T-cell (primary cell): ENCODE measurements at regions of chr19 and their contacts with region 1.

Region 1: DNA sequence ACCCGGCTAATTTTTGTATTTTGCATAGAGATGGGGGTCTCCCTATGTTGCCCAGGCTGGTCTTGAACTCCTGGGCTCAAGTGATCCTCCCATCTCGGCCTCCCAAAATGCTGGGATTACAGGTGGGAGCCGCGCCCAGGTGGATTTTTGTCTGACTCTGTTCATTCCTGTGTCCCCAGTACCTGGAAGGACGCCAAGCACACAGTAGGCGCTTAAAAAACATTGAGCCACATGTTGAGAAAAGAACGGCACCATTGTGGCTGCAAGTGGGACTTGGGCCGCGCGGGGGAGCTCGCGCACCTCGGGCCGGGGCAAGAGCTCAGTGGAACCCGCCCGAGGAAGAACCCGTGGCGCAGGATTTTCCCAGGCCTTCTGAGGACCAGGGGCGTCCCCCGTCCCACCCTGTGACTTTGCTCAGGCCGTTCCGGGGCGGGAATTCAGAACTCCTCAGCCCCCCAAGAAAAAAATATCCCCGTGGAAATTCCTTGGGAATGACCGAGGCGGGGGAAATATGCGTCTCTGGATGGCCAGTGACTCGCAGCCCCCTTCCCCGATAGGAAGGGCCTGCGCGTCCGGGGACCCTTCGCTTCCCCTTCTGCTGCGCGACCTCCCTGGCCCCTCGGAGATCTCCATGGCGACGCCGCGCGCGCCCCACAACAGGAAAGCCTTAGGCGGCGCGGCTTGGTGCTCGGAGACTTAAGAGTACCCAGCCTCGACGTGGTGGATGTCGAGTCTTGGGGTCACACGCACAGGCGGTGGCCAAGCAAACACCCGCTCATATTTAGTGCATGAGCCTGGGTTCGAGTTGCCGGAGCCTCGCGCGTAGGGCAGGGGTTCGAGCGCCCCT is 1.4 kb upstream of the ICAM1 start:
- DNase-seq: peak; percentile 60 to 92 (median 82)
- ATAC-seq: peak; percentile 67 to 74 (median 70)
- H3K4me3 ChIP-seq: peak overlapping the region; percentile 60 to 81
- H3K4me3 Mint-ChIP-seq: peak overlapping the region; percentile 81 to 84 (median 81)
- H3K27ac ChIP-seq: peak overlapping the region; percentile 94
- H3K27ac Mint-ChIP-seq: peak overlapping the region; percentile 82 to 87
- H3K4me1 ChIP-seq: peaks cover 3 to 36% of the 10 kb centered on the region in 2 experiments
- H3K4me1 Mint-ChIP-seq: peaks cover 22 to 30% (median 27%) of the 10 kb centered on the region in 3 donors
- H3K27me3 ChIP-seq: no peaks in the 10 kb centered on the region
- H3K27me3 Mint-ChIP-seq: no peaks in the 10 kb centered on the region

Region 2: DNA sequence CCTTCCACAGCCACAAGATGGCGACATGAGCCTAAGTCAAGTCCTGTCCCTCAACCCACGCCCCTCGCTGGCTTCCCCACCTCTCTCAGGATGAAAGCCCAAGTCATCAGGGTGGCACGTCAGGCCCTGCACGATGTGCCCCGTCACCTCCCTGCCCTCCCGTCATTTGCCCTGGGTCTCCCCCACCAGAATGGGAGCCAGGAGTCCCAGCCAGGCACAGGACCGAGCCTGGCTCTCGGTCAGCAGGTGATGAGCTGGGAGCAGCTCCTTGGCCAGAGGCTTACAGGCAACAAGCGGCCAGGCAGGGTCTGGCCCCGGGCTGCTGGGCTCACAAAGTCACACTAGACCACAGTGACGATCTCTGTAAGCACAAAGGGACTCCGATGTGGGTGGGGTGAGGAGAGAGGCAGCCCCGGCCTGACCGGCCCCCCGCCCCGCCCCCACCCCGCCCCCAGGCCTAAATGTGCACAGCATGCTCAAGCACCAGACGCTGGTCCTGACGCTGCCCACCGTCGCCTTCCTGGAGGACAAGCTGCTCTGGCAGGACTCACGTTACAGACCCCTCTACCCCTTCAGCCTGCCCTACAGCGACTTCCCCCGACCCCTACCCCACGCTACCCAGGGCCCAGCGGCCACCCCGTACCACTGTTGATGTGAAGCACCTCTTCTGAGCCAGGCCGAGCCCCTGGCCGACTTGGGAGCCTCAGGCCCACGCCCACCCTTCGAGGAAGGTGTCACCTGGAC is 10.2 kb before region 1 on chr19:
- CTCF ChIA-PET with region 1: interaction called, 5 to 19 read pairs
- POLR2A ChIA-PET with region 1: no interaction called
- DNase-seq: peak; percentile 62 to 94 (median 84)
- ATAC-seq: peak; percentile 75 to 92 (median 78)
- H3K4me3 ChIP-seq: no peak overlapping the region
- H3K4me3 Mint-ChIP-seq: no peak overlapping the region
- H3K27ac ChIP-seq: no peak overlapping the region
- H3K27ac Mint-ChIP-seq: no peak overlapping the region
- H3K4me1 ChIP-seq: peaks cover 0 to 18% of the 10 kb centered on the region in 2 experiments
- H3K4me1 Mint-ChIP-seq: peaks cover under 1 to 8% (median 6%) of the 10 kb centered on the region in 3 donors
- H3K27me3 ChIP-seq: no peaks in the 10 kb centered on the region
- H3K27me3 Mint-ChIP-seq: no peaks in the 10 kb centered on the region

Region 3: GRCh38 chr19:10279737-10280442 is 10.3 kb after region 1 on chr19:
- CTCF ChIA-PET with region 1: interaction called in 1 of 2 experiments, 6 read pairs
- POLR2A ChIA-PET with region 1: interaction called in 1 of 2 experiments, 13 read pairs
- DNase-seq: no peak
- ATAC-seq: no peak
- H3K4me3 ChIP-seq: no peak overlapping the region
- H3K4me3 Mint-ChIP-seq: no peak overlapping the region
- H3K27ac ChIP-seq: no peak overlapping the region
- H3K27ac Mint-ChIP-seq: peak overlapping the region in 1 of 2 donors; percentile 13
- H3K4me1 ChIP-seq: peaks cover 0 to 11% of the 10 kb centered on the region in 2 experiments
- H3K4me1 Mint-ChIP-seq: peaks cover 7 to 10% (median 9%) of the 10 kb centered on the region in 3 donors
- H3K27me3 ChIP-seq: no peaks in the 10 kb centered on the region
- H3K27me3 Mint-ChIP-seq: no peaks in the 10 kb centered on the region

Region 4: GRCh38 chr19:10292206-10292788 is 22.7 kb after region 1 on chr19:
- CTCF ChIA-PET with region 1: interaction called in 1 of 2 experiments, 22 read pairs
- POLR2A ChIA-PET with region 1: no interaction called
- DNase-seq: peak in 29 of 35 experiments; percentile 31 to 74 (median 51)
- ATAC-seq: peak; percentile 20 to 52 (median 26)
- H3K4me3 ChIP-seq: peak overlapping the region; percentile 39 to 67
- H3K4me3 Mint-ChIP-seq: peak overlapping the region; percentile 70 to 88 (median 73)
- H3K27ac ChIP-seq: no peak overlapping the region
- H3K27ac Mint-ChIP-seq: peak overlapping the region in 1 of 2 donors; percentile 16
- H3K4me1 ChIP-seq: peaks cover 33 to 89% of the 10 kb centered on the region in 2 experiments
- H3K4me1 Mint-ChIP-seq: peaks cover 57 to 69% (median 66%) of the 10 kb centered on the region in 3 donors
- H3K27me3 ChIP-seq: peaks cover 15 to 93% of the 10 kb centered on the region in 2 experiments
- H3K27me3 Mint-ChIP-seq: peaks cover 33 to 78% of the 10 kb centered on the region in 2 donors

Region 5: DNA sequence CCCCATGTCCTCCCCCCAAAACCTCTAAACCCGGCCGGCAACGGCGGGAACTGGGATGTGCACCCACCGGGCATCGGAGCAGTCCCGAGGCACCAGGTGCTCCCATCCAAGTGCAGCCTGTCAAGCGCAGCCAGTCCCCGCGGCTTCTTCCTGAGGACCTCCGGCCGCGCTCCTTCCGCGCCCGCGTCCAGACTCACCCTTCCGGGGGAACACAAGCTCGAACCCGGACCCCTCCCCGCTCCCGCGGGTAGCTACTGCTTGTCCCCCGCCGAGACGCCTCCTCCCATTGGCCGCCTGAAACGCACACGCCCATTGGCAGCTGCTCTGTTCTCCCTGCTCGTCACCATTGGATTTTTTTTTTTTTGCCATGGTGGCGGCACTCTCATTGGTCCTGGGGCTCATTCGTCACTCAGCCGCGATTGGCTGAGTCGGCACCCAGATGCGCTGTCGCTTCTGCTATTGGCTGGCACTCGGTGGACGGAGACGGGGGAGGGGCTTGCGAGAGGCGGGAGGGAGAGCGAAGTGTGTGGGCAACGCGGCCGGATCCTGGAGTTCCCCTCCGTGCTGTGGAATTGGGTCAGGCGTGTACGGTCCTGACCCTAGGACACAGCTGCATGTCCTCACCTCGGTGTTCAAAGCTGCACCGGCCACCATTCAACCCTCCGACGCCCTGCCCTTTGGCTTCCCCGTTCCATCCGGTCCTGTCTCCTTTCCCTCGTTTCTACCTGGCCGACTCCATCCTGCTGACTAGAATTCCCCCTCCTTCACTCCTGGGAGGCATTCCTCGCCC is 111.0 kb after region 1 on chr19 and contains the start of gene TYK2:
- CTCF ChIA-PET with region 1: interaction called, 9 to 10 read pairs
- POLR2A ChIA-PET with region 1: no interaction called
- DNase-seq: peak; percentile 88 to 98 (median 93)
- ATAC-seq: peak; percentile 94 to 97 (median 96)
- H3K4me3 ChIP-seq: peak within 1 kb of the TSS; percentile 95 to 97
- H3K4me3 Mint-ChIP-seq: peak within 1 kb of the TSS; percentile 85 to 95 (median 94)
- H3K27ac ChIP-seq: peak within 1 kb of the TSS; percentile 88
- H3K27ac Mint-ChIP-seq: peak within 1 kb of the TSS; percentile 84 to 87
- H3K4me1 ChIP-seq: peaks cover 13 to 28% of the 10 kb centered on the region in 2 experiments
- H3K4me1 Mint-ChIP-seq: peaks cover 22 to 26% (median 25%) of the 10 kb centered on the region in 3 donors
- H3K27me3 ChIP-seq: peaks cover 0 to 3% of the 10 kb centered on the region in 2 experiments
- H3K27me3 Mint-ChIP-seq: no peaks in the 10 kb centered on the region
- total RNA-seq, gene TYK2: 277 to 346 (median 323) TPM

Region 6: DNA sequence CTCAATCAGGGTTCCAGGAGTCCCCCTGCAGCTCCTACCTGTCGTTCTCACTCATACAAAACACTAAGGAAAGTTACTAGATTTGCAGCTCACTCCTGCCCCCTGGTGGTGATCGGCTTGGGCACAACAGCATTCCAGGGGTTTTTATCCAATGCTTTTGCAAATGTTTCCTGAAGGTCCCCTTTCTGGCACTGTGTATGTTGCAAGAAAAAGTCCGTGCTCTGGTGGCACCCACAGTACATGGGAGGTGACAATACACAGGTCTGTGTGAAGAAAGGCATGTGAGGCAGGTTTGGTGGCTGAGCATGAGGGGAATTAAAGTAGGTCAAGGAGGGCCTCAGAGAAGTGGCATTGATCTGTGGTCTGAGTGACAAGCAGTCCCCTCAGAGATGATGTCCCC is 119.4 kb after region 1 on chr19:
- CTCF ChIA-PET with region 1: interaction called, 19 to 75 read pairs
- POLR2A ChIA-PET with region 1: no interaction called
- DNase-seq: peak; percentile 37 to 90 (median 76)
- ATAC-seq: peak; percentile 54 to 61 (median 59)
- H3K4me3 ChIP-seq: no peak overlapping the region
- H3K4me3 Mint-ChIP-seq: no peak overlapping the region
- H3K27ac ChIP-seq: no peak overlapping the region
- H3K27ac Mint-ChIP-seq: peak overlapping the region; percentile 49 to 55
- H3K4me1 ChIP-seq: no peaks in the 10 kb centered on the region
- H3K4me1 Mint-ChIP-seq: peaks cover 0 to 5% (median 0%) of the 10 kb centered on the region in 3 donors
- H3K27me3 ChIP-seq: peaks cover 0 to 3% of the 10 kb centered on the region in 2 experiments
- H3K27me3 Mint-ChIP-seq: no peaks in the 10 kb centered on the region